BJ (cell line): ENCODE measurements at regions of chr6 and their contacts with region 1.

Region 1: GRCh38 chr6:8219352-8219943 is 117.1 kb upstream of the EEF1E1 start:
- DNase-seq: no peak
- H3K4me3 ChIP-seq: no peak overlapping the region
- H3K27me3 ChIP-seq: no peaks in the 10 kb centered on the region
- CTCF ChIP-seq: peak; percentile 62

Region 2: DNA sequence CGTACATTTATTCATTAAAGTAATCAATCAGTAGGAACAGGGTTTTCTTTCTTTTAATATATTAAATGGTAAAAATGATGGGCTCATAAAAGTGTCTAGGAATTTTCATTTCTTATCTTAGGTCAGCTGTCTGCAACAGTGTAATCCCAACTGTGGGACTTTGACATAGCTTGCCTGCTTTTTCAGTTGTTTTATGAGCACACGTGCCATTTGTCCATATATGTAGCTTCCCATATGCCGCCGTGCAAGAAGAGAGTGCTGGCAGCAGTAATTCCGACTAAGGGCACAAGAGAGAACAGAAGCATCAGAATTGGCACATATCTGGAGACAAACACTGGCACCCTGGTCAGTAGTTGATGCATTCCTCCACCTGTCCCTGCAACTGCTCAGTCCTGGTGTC is 96.2 kb before region 1 on chr6:
- CTCF ChIA-PET with region 1: interaction called, 340 read pairs
- POLR2A ChIA-PET with region 1: no interaction called
- DNase-seq: no peak
- H3K4me3 ChIP-seq: no peak overlapping the region
- H3K27me3 ChIP-seq: no peaks in the 10 kb centered on the region
- CTCF ChIP-seq: no peak

Region 3: GRCh38 chr6:8139451-8139850 is 80.0 kb before region 1 on chr6:
- CTCF ChIA-PET with region 1: interaction called, 340 read pairs
- POLR2A ChIA-PET with region 1: no interaction called
- DNase-seq: no peak
- H3K4me3 ChIP-seq: no peak overlapping the region
- H3K27me3 ChIP-seq: no peaks in the 10 kb centered on the region
- CTCF ChIP-seq: no peak

Region 4: GRCh38 chr6:8180327-8181159 is 38.9 kb before region 1 on chr6:
- CTCF ChIA-PET with region 1: interaction called, 12 read pairs
- POLR2A ChIA-PET with region 1: no interaction called
- DNase-seq: peak; percentile 77
- H3K4me3 ChIP-seq: no peak overlapping the region
- H3K27me3 ChIP-seq: no peaks in the 10 kb centered on the region
- CTCF ChIP-seq: no peak

Region 5: GRCh38 chr6:8195040-8195713 is 24.3 kb before region 1 on chr6:
- CTCF ChIA-PET with region 1: interaction called, 10 read pairs
- POLR2A ChIA-PET with region 1: no interaction called
- DNase-seq: no peak
- H3K4me3 ChIP-seq: no peak overlapping the region
- H3K27me3 ChIP-seq: no peaks in the 10 kb centered on the region
- CTCF ChIP-seq: 0 out of 2 replicates have a peak, but pooled peaks have one; percentile 3

Region 6: DNA sequence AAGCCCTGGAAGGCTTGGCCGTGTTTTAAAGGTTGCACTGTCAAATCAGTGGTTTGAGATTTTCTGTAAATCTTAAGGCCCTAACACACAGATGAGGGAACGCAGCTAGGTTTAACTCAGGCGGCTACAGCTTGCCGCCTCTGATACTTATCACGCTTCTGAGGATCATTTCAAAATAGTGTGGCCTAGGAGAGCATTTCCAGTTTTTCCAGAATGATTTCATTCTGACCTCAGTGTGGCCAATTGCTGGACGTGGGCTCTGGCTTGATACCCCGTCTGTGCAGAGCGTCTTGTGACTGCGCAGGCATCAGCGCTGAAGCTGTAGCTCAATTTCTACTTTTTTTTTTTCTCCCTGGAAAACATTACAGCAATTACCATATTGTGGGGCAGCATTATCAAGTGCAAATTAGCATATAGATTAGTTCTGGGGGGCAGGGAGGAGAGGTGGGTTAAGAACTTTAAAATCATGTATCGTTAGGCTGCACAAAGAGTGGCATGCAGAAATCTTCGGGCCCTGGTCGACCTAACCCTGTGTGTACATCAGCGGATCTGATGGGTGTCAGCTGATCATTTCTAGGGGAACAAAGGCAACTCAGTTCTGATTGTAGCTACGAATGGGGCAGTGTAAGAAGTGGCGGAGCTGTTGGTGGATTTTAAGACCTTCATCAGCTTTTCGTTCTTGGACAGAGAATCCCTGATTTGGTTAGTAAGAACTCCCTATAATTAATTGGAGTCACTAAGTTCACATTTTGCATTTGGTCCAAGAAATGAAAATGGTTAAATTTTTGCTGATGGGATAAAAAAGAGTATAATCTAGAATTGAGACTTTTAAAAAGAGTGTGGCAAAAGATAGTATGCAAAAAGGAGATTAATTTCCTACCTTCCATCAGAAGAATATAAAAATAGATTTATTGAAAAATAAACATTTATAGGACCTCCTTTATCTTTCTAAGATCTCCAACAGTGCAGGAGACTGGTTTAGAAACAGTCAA is 12.0 kb before region 1 on chr6:
- CTCF ChIA-PET with region 1: interaction called, 26 read pairs
- POLR2A ChIA-PET with region 1: no interaction called
- DNase-seq: no peak
- H3K4me3 ChIP-seq: no peak overlapping the region
- H3K27me3 ChIP-seq: no peaks in the 10 kb centered on the region
- CTCF ChIP-seq: no peak